Dendritic cell treated with granulocyte-macrophage colony-stimulating factor and Interleukin-4, amounts not matched to agents 40 ng/mL and 50 ng/mL, for 4 days (primary cell): ENCODE measurements at regions of chr9 and their contacts with region 1.

Region 1: GRCh38 chr9:4662108-4662988 is at the start of gene PLPP6:
- H3K4me3 Mint-ChIP-seq: peak within 1 kb of the TSS; percentile 78
- H3K27ac Mint-ChIP-seq: peak within 1 kb of the TSS; percentile 80
- H3K4me1 Mint-ChIP-seq: peaks cover 44% of the 10 kb centered on the region
- H3K27me3 Mint-ChIP-seq: peaks cover 28% of the 10 kb centered on the region

Region 2: DNA sequence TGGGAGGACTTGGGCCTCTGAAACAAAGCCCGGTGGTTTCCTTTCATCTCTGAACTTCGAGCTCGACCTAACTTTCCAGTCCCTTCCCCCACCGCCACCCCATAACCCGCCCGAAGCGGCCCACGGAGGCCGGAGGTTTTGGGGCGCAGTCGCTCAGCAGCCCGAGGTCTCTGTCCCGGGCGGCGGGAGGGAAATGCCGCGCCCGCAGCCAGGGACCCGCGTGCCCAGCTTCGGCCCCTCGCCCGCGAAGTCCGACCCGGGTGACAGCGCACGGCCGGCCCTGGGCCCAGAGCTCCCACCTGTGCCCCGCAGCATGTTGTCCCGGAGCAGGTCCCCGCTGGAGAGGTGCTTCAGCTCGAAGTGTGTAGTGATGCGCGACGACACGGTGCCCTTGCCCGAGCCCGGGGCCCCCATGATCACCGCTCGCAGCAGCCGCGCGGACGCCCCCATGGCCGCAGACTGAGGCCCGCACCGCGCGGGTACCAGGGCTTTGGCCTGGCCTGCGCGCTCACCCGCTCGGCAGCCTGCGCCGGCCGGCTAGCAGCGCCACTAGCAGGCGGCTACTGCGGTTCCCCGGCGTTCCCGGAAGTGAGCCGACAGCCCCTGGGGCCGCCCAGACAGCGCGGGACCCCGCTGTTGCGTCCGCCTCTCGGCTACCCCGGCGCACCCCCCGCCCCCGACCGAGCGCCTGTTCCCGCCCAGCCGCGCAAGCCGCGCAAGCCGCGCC is 78.5 kb after region 1 on chr9 and contains the start of gene AK3:
- intact Hi-C with region 1: loop called (anchors 5 kb)
- H3K4me3 Mint-ChIP-seq: peak within 1 kb of the TSS; percentile 87
- H3K27ac Mint-ChIP-seq: peak within 1 kb of the TSS; percentile 86
- H3K4me1 Mint-ChIP-seq: peaks cover 25% of the 10 kb centered on the region
- H3K27me3 Mint-ChIP-seq: no peaks in the 10 kb centered on the region

Region 3: DNA sequence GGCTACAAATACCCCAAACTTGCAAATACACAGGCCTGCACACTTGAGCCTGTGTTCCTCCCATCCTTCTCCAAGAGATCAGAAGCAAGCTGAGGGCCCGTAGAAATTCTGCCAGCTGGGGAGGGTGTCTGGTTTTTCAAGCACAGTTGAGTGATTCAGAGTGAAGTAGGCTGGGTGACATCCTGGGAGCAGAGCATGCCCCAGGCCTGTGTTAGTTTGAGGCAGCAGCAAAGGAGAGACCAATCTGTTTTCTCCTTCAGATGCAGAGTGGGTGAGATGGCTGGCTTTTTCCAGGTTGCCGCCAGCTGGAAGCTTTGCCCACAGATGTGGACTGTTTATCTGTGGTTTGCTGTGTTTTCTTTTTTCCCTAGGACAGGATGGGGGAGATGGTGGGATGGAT is 193.5 kb after region 1 on chr9:
- intact Hi-C with region 1: no loop called
- H3K4me3 Mint-ChIP-seq: no peak overlapping the region
- H3K27ac Mint-ChIP-seq: no peak overlapping the region
- H3K4me1 Mint-ChIP-seq: peaks cover 5% of the 10 kb centered on the region
- H3K27me3 Mint-ChIP-seq: no peaks in the 10 kb centered on the region